Activated CD8-positive, alpha-beta T cell treated with anti-CD3 and anti-CD28 coated beads for 36 hours (primary cell): ENCODE measurements at regions of chr15 and their contacts with region 1.

Region 1: GRCh38 chr15:68783226-68784058 is 37.3 kb downstream of the ANP32A start:
- DNase-seq: peak; percentile 79
- ATAC-seq: peak; percentile 85
- H3K4me3 Mint-ChIP-seq: no peak overlapping the region
- H3K27ac Mint-ChIP-seq: peak overlapping the region; percentile 72
- H3K4me1 Mint-ChIP-seq: peaks cover 43% of the 10 kb centered on the region
- H3K27me3 Mint-ChIP-seq: no peaks in the 10 kb centered on the region
- CTCF ChIP-seq: peak; percentile 79

Region 2: GRCh38 chr15:68820295-68821189 is 37.1 kb after region 1 on chr15 and contains the start of gene ANP32A:
- CTCF ChIA-PET with region 1: interaction called, 19 read pairs
- POLR2A ChIA-PET with region 1: interaction called, 11 read pairs
- intact Hi-C with region 1: no loop called
- DNase-seq: peak; percentile 96
- ATAC-seq: peak; percentile 78
- H3K4me3 Mint-ChIP-seq: peak within 1 kb of the TSS; percentile 88
- H3K27ac Mint-ChIP-seq: peak within 1 kb of the TSS; percentile 96
- H3K4me1 Mint-ChIP-seq: peaks cover 30% of the 10 kb centered on the region
- H3K27me3 Mint-ChIP-seq: no peaks in the 10 kb centered on the region
- CTCF ChIP-seq: no peak
- total RNA-seq, gene ANP32A: 239 to 246 TPM

Region 3: DNA sequence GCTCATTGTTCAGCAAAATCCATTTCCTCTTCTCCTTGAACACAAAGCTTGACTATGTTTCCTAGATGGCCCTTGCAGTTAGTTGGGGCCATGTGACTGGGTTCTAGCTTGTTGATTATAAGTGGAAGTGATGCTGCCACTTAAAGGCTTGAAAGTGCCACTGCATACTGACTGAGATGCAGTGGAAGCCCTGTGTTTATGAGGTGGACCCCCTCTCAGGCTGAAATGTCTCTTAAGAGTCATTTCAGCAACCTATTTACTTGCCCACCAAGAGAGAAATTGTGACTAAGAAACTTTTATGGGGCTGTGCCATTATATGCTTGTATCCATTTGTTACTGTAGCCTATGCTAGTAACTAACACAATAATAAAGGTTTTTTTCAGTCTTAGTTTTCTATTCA is 45.6 kb after region 1 on chr15:
- CTCF ChIA-PET with region 1: interaction called, 17 read pairs
- POLR2A ChIA-PET with region 1: interaction called, 5 read pairs
- intact Hi-C with region 1: loop called (anchors 2 kb)
- DNase-seq: peak; percentile 48
- ATAC-seq: peak; percentile 96
- H3K4me3 Mint-ChIP-seq: no peak overlapping the region
- H3K27ac Mint-ChIP-seq: no peak overlapping the region
- H3K4me1 Mint-ChIP-seq: peaks cover 23% of the 10 kb centered on the region
- H3K27me3 Mint-ChIP-seq: no peaks in the 10 kb centered on the region
- CTCF ChIP-seq: peak; percentile 59